Naive thymus-derived CD4-positive, alpha-beta T cell (primary cell): ENCODE measurements at regions of chr1 and their contacts with region 1.

Region 1: GRCh38 chr1:193747579-193747978 is 561.2 kb upstream of the B3GALT2 start:
- DNase-seq: no peak
- ATAC-seq: no peak
- H3K4me3 ChIP-seq: no peak overlapping the region
- H3K4me3 Mint-ChIP-seq: no peak overlapping the region
- H3K27ac ChIP-seq: no peak overlapping the region
- H3K27ac Mint-ChIP-seq: no peak overlapping the region
- H3K4me1 ChIP-seq: no peaks in the 10 kb centered on the region
- H3K4me1 Mint-ChIP-seq: no peaks in the 10 kb centered on the region
- H3K27me3 ChIP-seq: no peaks in the 10 kb centered on the region
- H3K27me3 Mint-ChIP-seq: peaks cover 0 to 9% (median 0%) of the 10 kb centered on the region in 5 donors

Region 2: GRCh38 chr1:193730017-193730416 is 17.6 kb before region 1 on chr1:
- CTCF ChIA-PET with region 1: no interaction called
- POLR2A ChIA-PET with region 1: no interaction called
- intact Hi-C with region 1: loop called in 1 of 2 experiments (anchors 1 kb)
- DNase-seq: no peak
- ATAC-seq: no peak
- H3K4me3 ChIP-seq: no peak overlapping the region
- H3K4me3 Mint-ChIP-seq: no peak overlapping the region
- H3K27ac ChIP-seq: no peak overlapping the region
- H3K27ac Mint-ChIP-seq: no peak overlapping the region
- H3K4me1 ChIP-seq: no peaks in the 10 kb centered on the region
- H3K4me1 Mint-ChIP-seq: peaks cover 0 to 4% (median 0%) of the 10 kb centered on the region in 7 donors
- H3K27me3 ChIP-seq: no peaks in the 10 kb centered on the region
- H3K27me3 Mint-ChIP-seq: no peaks in the 10 kb centered on the region